ENCODE measurements at regions of chr9 and their contacts with region 1.

Region 1: GRCh38 chr9:115591584-115591984 is 473.6 kb upstream of the TNC start:
- DNase-seq: peak; percentile 84
- ATAC-seq: peak; percentile 91
- H3K4me3 ChIP-seq: no peak overlapping the region
- H3K27ac ChIP-seq: no peak overlapping the region
- H3K4me1 ChIP-seq: peaks cover 7 to 11% of the 10 kb centered on the region in 2 experiments
- H3K27me3 ChIP-seq: peaks cover 26% of the 10 kb centered on the region
- CTCF ChIP-seq: peak; percentile 46 to 73 (median 72); a peak in 5 of 6 replicates
- POLR2A ChIP-seq: no peak
- RAD21 ChIP-seq: peak; percentile 79

Region 2: DNA sequence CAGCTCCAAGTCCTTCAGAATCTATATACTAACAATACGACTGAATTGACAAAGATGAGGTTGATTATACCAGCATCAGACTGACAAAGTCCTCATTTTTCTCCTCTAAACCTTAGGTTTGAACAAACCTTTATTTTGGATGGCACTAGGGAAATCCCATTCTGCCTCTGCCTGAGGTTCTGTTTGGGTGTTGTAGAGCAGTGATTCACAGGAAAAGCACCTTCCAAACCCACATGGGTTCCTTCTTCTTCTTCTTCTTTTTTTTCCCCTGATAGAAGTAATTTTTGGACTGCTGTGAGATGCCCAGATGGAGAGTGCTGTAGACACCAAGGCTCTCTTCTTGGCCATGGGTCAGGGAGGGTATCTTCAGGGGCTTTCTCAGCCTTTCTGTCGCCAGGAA is 397.1 kb after region 1 on chr9:
- CTCF ChIA-PET with region 1: no interaction called
- POLR2A ChIA-PET with region 1: no interaction called
- RAD21 ChIA-PET with region 1: no interaction called
- intact Hi-C with region 1: no loop called
- DNase-seq: no peak
- ATAC-seq: no peak
- H3K4me3 ChIP-seq: no peak overlapping the region
- H3K27ac ChIP-seq: no peak overlapping the region
- H3K4me1 ChIP-seq: 0 out of 4 replicates have a peak, but pooled peaks cover 0 to 3% of the 10 kb centered on the region in 2 experiments
- H3K27me3 ChIP-seq: no peaks in the 10 kb centered on the region
- CTCF ChIP-seq: no peak
- POLR2A ChIP-seq: no peak
- RAD21 ChIP-seq: no peak

Region 3: GRCh38 chr9:116149844-116150243 is 558.3 kb after region 1 on chr9:
- CTCF ChIA-PET with region 1: interaction called, 6 read pairs
- POLR2A ChIA-PET with region 1: no interaction called
- RAD21 ChIA-PET with region 1: no interaction called
- intact Hi-C with region 1: loop called (anchors 5 kb)
- DNase-seq: peak; percentile 22
- ATAC-seq: peak; percentile 77
- H3K4me3 ChIP-seq: no peak overlapping the region
- H3K27ac ChIP-seq: no peak overlapping the region
- H3K4me1 ChIP-seq: no peaks in the 10 kb centered on the region
- H3K27me3 ChIP-seq: peaks cover 11% of the 10 kb centered on the region; the same call in 1 of the 2 replicates
- CTCF ChIP-seq: peak; percentile 49 to 81 (median 75); a peak in 5 of 6 replicates
- POLR2A ChIP-seq: no peak
- RAD21 ChIP-seq: peak; percentile 51; the same call in 1 of the 2 replicates

Region 4: DNA sequence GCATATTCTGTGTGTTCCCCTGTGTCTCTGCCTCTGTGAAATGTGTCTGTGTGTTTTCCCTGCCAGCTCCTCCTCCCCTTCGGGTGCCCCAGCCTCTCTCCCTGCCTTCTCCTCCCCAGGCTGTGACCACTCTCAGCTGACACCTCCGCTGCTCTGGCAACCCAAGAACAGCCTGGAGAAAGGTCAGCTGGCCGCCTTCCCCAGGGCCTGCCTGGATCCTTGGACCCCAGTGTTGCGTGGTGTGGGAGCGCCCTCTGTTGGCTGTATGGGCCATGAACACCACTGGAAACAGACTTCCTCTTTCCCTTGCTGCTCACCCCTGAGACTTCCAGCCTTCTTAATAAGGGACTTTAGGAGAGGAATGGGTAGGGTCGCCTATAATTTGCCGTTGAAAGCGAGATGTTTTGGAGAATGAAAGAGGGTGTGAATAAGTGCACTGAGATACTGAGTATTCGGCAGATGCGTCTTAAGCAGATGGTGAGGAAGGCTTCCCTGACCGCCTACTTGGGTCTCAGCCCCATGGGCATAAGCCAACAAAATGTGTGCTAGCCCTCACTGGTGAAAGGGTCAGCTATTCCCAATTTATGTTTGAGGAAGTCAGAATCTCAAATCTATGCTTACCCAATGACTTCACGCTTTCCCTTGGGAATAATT is 980.6 kb after region 1 on chr9:
- CTCF ChIA-PET with region 1: interaction called, 13 read pairs
- POLR2A ChIA-PET with region 1: no interaction called
- RAD21 ChIA-PET with region 1: interaction called in 1 of 2 experiments, 4 read pairs
- intact Hi-C with region 1: loop called (anchors 1 kb)
- DNase-seq: peak; percentile 33
- ATAC-seq: peak; percentile 99
- H3K4me3 ChIP-seq: no peak overlapping the region
- H3K27ac ChIP-seq: no peak overlapping the region
- H3K4me1 ChIP-seq: peaks cover 2 to 5% of the 10 kb centered on the region in 2 experiments; a peak in 3 of 4 replicates
- H3K27me3 ChIP-seq: no peaks in the 10 kb centered on the region
- CTCF ChIP-seq: peak; percentile 81 to 93 (median 91)
- POLR2A ChIP-seq: no peak
- RAD21 ChIP-seq: peak; percentile 97

Region 5: DNA sequence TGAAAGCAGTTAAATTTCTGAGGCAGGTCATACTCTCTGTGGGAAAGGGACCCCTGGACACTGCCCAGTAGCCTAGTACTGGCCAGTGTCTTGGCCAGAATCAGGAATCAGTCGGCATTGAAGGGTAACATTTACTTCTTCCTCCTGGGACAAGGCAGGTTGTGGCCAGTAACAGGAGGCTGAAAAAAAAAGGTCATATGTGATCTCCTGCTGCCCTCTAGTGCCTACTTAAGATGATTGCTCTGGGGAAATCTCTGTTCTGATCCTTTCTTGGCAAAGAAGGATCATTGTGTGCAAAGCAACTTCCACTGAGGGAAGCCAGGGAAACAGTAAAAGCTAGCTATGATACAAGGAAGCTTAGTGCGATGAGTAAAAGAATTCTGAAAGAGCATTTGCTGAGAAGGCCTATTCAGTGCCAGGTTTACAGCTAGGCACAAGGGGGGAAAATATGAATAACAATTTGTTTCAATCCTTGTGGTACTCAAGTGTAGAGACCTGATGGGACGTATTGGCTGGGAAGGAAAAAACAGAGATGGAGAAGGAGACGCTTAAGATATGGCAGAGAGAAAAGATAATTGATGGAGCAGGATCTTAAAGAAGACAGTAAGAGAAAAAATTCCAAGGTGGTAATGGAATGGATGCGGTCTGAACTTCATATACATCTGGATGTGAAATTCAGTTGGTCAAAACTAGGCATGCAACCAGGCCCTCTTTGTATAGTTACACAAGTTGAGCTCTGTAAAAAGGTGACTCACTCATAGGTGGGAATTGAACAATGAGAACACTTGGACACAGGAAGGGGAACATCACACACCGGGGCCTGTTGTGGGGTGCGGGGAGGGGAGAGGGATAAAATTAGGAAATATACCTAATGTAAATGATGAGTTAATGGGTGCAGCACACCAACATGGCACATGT is 1069.7 kb after region 1 on chr9:
- CTCF ChIA-PET with region 1: interaction called, 3 read pairs
- POLR2A ChIA-PET with region 1: no interaction called
- RAD21 ChIA-PET with region 1: no interaction called
- intact Hi-C with region 1: loop called (anchors 2 kb)
- DNase-seq: peak; percentile 59
- ATAC-seq: peak; percentile 90
- H3K4me3 ChIP-seq: no peak overlapping the region
- H3K27ac ChIP-seq: no peak overlapping the region
- H3K4me1 ChIP-seq: no peaks in the 10 kb centered on the region; a peak in 1 of 4 replicates
- H3K27me3 ChIP-seq: no peaks in the 10 kb centered on the region
- CTCF ChIP-seq: peak; percentile 69 to 73 (median 73)
- POLR2A ChIP-seq: no peak
- RAD21 ChIP-seq: peak; percentile 79

Measured in HCT116 (cell line).